Activated T-helper 2 cell treated with anti-CD3 and anti-CD28 coated beads, Interferon-gamma antibody, Interleukin-2, Interleukin-4, amounts not matched to agents 10 μg/mL and 5 μg/mL and 100 μg/mL, durations not matched to agents 14 hours and 24 hours and 36 hours (primary cell): ENCODE measurements at regions of chr1 and their contacts with region 1.

Region 1: GRCh38 chr1:42766741-42767509 is at the starts of genes C1orf50 and P3H1:
- DNase-seq: peak; percentile 100
- H3K4me3 Mint-ChIP-seq: no peak within 1 kb of the TSS
- H3K27ac Mint-ChIP-seq: peak within 1 kb of the TSS; percentile 88
- H3K4me1 Mint-ChIP-seq: peaks cover 17% of the 10 kb centered on the region
- H3K27me3 Mint-ChIP-seq: no peaks in the 10 kb centered on the region
- total RNA-seq, gene C1orf50: 6.9 and 10.3 TPM in 2 replicates
- total RNA-seq, gene P3H1: 47.9 and 56.7 TPM in 2 replicates

Region 2: GRCh38 chr1:41758904-41759548 is 1007.9 kb before region 1 on chr1:
- intact Hi-C with region 1: no loop called
- DNase-seq: no peak
- H3K4me3 Mint-ChIP-seq: no peak overlapping the region
- H3K27ac Mint-ChIP-seq: no peak overlapping the region
- H3K4me1 Mint-ChIP-seq: peaks cover 27% of the 10 kb centered on the region
- H3K27me3 Mint-ChIP-seq: no peaks in the 10 kb centered on the region

Region 3: DNA sequence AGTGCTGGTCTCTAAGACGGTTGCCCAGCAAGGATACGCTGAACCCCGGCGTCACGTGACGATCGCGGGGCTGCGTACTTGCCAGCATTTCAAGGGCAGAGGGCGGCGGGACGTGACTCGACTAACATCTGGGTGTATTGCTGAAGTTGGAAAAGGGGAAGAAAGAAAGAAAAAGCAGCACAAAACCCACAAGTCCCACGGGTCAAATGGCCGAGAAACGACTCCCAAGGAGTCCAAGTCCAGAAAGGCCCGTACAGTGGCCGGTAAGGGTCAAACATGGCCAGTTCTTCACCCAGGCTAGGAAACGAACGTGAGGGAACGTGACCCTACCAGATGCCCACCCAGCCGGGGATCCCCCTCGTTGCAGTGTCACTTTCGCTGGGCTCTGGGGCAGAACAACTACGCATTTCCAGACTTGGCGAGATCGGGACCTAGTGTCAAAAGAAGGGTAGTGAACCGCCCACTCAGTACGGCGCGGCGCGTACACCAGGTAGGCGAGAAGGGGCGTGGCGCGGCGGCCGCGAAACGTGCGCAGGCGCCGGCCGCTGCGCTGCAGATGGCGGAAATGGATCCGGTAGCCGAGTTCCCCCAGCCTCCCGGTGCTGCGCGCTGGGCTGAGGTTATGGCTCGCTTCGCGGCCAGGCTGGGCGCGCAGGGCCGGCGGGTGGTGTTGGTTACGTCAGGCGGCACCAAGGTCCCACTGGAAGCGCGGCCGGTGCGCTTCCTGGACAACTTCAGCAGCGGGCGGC is 310.7 kb before region 1 on chr1 and contains the starts of genes PPCS and ZMYND12:
- intact Hi-C with region 1: loop called (anchors 10 kb)
- DNase-seq: peak; percentile 87
- H3K4me3 Mint-ChIP-seq: peak within 1 kb of the TSS; percentile 93
- H3K27ac Mint-ChIP-seq: peak within 1 kb of the TSS; percentile 98
- H3K4me1 Mint-ChIP-seq: peaks cover 24% of the 10 kb centered on the region
- H3K27me3 Mint-ChIP-seq: peaks cover 3% of the 10 kb centered on the region
- total RNA-seq, gene PPCS: 41.4 and 41.8 TPM in 2 replicates
- total RNA-seq, gene ZMYND12: 0.11 and 0.28 TPM in 2 replicates

Region 4: GRCh38 chr1:42681741-42682483 is 85.0 kb before region 1 on chr1 and contains the start of gene YBX1:
- intact Hi-C with region 1: loop called (anchors 1 kb)
- DNase-seq: peak; percentile 94
- H3K4me3 Mint-ChIP-seq: peak within 1 kb of the TSS; percentile 97
- H3K27ac Mint-ChIP-seq: peak within 1 kb of the TSS; percentile 96
- H3K4me1 Mint-ChIP-seq: peaks cover 45% of the 10 kb centered on the region
- H3K27me3 Mint-ChIP-seq: no peaks in the 10 kb centered on the region
- total RNA-seq, gene YBX1: 815 and 840 TPM in 2 replicates

Region 5: DNA sequence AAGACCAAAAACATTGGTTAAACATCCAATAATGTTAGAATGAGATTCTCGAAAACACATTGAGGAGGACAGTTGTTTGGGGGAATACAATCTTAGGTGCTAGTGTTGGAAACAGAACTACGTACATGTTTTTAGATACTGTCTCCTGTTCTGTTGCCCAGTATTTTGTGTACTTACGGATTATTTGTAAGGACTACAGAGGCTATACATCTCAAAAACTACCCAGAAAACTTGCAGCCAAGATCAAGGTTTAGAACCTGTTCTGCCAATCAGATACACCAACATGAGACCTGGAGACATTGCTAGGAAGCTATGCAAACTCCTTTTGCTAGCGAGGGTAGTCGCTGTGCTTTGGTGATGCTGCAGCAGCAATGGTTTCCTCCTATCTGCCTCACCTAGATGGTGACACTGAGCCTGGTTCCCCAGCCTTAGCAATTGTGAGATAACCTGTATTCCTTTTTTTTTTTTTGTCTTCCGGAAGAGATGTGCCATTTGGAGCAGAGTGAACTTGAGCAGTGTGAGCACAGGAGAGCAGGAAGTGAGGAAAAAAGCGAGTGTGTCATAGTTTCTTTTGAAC is 62.9 kb before region 1 on chr1:
- intact Hi-C with region 1: no loop called
- DNase-seq: no peak
- H3K4me3 Mint-ChIP-seq: no peak overlapping the region
- H3K27ac Mint-ChIP-seq: no peak overlapping the region
- H3K4me1 Mint-ChIP-seq: peaks cover 2% of the 10 kb centered on the region
- H3K27me3 Mint-ChIP-seq: no peaks in the 10 kb centered on the region

Region 6: DNA sequence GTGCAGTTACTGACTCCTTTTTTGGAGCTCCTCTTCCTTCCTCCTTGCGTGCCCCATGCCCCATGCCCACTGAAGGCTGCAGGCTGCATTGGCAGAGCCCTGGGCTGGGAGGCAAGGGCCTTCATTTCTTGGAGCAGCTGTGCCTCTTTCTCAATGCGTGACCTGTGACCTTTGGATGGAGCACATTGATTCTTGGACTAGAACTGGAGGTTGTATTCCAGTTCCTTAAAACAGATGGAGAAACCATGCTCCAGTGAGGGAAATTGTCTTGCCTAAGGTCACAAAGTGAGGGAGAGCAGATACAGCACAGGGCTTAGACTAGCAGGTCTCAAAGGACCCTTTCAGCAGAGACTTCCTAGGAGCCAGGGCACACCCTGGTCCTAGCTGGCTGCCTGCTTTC is 26.9 kb after region 1 on chr1:
- intact Hi-C with region 1: no loop called
- DNase-seq: no peak
- H3K4me3 Mint-ChIP-seq: no peak overlapping the region
- H3K27ac Mint-ChIP-seq: no peak overlapping the region
- H3K4me1 Mint-ChIP-seq: no peaks in the 10 kb centered on the region
- H3K27me3 Mint-ChIP-seq: peaks cover 7% of the 10 kb centered on the region

Region 7: DNA sequence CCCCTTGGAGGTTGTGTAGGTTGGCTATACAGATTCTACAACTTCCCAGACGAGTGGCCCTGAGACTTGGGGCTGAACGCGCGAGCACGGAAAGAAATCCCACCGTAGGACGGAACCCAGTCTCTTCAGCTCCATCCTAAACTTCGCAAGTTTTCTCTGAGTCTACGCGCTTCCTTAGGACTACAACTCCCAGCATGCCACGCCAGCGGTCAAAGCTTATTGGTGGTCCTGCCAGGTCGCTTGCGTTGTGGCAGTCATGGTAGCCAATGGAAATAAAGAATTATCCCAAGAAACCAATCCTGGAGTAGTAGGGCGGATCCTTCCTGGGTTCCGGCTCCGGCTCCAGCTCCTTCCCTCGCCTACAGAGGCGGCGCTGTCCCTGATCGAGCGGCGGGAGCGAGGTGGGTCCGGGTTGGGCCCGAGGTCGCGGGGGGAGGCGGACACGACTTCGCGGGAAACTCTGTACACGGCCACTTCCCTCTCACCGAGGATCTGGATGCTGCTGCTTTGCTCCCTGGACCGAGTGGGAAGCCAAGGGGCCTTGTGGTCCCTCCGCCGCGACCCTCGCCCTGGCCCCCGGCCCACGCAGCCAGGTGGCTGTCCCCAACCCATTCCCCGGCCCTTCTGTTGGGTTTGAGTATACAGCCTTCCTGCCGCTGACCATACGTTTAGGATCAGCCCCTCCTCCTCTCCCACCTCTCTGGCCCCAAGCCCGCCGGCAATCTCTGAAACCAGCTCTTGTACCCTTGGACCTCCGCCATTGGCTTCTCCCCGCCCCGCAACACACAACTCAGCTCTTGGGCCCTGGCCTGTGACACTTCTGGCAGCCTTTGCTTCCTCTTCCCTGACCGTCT is 79.6 kb after region 1 on chr1 and contains the start of gene ZNF691:
- intact Hi-C with region 1: loop called (anchors 5 kb)
- DNase-seq: peak; percentile 86
- H3K4me3 Mint-ChIP-seq: peak within 1 kb of the TSS; percentile 96
- H3K27ac Mint-ChIP-seq: peak within 1 kb of the TSS; percentile 75
- H3K4me1 Mint-ChIP-seq: peaks cover 33% of the 10 kb centered on the region
- H3K27me3 Mint-ChIP-seq: no peaks in the 10 kb centered on the region
- total RNA-seq, gene ZNF691: 8.4 and 9.6 TPM in 2 replicates